Esophagus muscularis mucosa (tissue), 4 donors: ENCODE measurements at regions of chr11 and their contacts with region 1.

Region 1: DNA sequence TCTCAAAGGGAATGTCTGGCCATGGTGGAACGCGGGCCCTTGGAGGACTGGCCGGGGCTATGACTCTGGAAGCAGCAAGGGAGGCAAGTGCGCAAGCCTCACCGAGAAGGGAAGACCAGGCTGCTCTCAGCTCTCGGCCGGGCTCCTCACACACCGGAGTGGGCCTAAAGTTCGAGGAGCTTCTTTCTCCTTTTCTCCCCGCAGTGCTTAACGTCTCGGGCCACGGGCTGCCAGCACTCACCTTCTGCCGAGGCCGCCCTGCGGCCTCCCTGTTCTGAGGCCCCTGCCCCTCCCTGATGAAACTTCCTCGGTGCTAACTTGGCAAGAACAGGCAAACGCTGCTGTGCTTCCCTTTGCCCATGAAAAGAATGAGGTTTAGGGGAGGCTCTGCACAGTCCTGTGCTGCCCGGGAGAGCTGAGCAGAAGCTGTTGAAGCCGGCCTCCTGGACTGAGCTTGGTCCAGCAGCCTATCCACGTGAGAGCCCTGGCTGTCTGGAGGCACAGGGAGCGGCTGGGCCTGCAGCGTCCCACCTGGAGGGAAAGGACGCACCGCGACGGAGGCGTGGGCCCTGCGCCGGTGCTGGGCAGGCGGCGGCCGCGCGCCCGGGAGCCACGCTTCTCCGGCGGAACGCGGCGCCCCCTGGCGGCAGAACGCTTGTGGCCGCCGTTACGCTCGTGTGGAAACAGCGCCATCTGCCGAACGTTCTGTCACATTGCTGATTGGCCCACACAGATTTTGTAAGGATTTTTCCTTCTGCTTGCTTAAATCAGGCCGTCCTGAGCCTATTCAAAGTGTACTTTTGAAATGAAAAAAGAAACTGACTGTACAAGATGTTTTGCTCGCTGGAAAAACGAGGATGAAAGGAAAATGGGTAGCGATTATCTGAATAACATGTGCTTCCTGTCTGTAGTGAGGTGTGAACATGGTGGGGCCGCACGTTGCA is 65.0 kb upstream of the TMEM45B start:
- DNase-seq: peak; percentile 91
- H3K4me3 ChIP-seq: peak overlapping the region; percentile 41 to 49 (median 42)
- H3K27ac ChIP-seq: no peak overlapping the region
- H3K4me1 ChIP-seq: peaks cover 3 to 11% (median 10%) of the 10 kb centered on the region in 4 donors
- H3K27me3 ChIP-seq: no peaks in the 10 kb centered on the region
- CTCF ChIP-seq: peak; percentile 98 to 100 (median 98)
- EP300 ChIP-seq: no peak
- POLR2A ChIP-seq: no peak

Region 2: GRCh38 chr11:129117595-129118350 is 632.8 kb before region 1 on chr11:
- intact Hi-C with region 1: loop called (anchors 10 kb)
- DNase-seq: no peak
- H3K4me3 ChIP-seq: no peak overlapping the region
- H3K27ac ChIP-seq: no peak overlapping the region
- H3K4me1 ChIP-seq: peaks cover 0 to 9% (median 5%) of the 10 kb centered on the region in 4 donors
- H3K27me3 ChIP-seq: no peaks in the 10 kb centered on the region
- CTCF ChIP-seq: peak; percentile 75 to 83 (median 83)
- EP300 ChIP-seq: no peak
- POLR2A ChIP-seq: no peak

Region 3: DNA sequence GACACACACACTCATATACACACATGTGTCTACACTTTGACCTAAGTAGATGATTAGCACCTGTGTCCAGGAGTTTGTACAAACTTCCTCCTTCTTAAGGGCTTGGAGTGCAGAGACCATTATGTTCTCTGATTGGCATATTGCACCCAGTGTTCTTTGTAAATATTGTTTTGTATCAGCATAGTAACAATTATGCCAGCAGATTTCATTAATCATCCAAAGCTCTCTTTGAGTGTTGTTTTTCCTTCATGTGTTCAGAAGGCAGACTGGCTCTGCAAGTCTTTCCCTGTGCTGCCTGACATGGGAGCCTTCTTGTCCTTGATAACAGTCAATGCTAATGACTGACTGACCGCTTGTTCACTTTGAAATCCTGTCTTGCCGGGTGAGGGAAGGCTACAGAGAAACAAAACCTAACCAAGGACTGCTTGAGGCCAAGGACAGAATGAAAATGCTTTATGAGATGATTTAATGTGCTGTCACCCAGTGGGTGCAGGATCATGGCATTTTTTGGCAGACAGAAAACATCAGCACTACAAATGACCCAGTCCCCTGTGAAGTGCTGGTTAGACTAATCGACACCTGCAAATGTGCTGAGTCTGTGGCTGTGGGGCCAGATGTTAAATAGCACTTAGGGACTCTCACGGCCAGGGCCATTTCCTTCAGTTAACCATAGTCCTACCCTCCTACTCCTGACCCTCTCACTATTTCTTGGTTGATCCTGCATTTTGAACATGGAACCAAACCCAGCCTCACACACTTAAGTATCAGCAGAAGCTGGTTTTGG is 381.5 kb before region 1 on chr11:
- intact Hi-C with region 1: loop called (anchors 5 kb)
- DNase-seq: no peak
- H3K4me3 ChIP-seq: no peak overlapping the region
- H3K27ac ChIP-seq: no peak overlapping the region
- H3K4me1 ChIP-seq: peaks cover 12 to 24% (median 18%) of the 10 kb centered on the region in 4 donors
- H3K27me3 ChIP-seq: peaks cover 0 to 85% (median 26%) of the 10 kb centered on the region in 4 donors
- CTCF ChIP-seq: no peak
- EP300 ChIP-seq: no peak
- POLR2A ChIP-seq: no peak